ENCODE measurements at regions of chr6 and their contacts with region 1.

Region 1: GRCh38 chr6:142112451-142113061 is 20.2 kb upstream of the GJE1 start:
- H3K4me3 ChIP-seq: no peak overlapping the region
- H3K27ac ChIP-seq: no peak overlapping the region
- H3K4me1 ChIP-seq: no peaks in the 10 kb centered on the region
- CTCF ChIP-seq: no peak

Region 2: GRCh38 chr6:141675957-141676356 is 436.6 kb before region 1 on chr6:
- CTCF ChIA-PET with region 1: interaction called, 15 read pairs
- POLR2A ChIA-PET with region 1: no interaction called
- H3K4me3 ChIP-seq: no peak overlapping the region
- H3K27ac ChIP-seq: no peak overlapping the region
- H3K4me1 ChIP-seq: no peaks in the 10 kb centered on the region
- CTCF ChIP-seq: no peak